ENCODE measurements at regions of chr3 and their contacts with region 1.

Region 1: DNA sequence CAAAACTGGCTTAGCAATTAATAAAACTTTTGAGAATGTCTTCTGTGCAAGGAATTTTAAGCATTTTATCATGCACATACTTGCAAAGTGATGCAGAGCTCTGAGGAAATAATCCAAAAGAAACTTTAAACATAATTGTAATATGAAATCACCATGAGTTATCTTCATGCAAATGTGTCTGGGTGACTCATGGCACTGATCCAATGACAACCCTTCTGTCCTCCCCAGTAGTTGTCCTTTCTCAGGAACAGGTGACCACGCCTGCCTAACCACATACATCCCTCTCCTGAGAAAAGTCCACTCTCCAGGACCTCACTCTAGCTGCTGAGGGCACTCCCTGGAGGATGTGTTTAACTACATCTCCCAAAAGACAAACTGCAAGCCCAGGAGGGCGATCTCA is 530.6 kb upstream of the IL12A start:
- DNase-seq: peak; percentile 92 to 96
- H3K4me3 ChIP-seq: no peak overlapping the region
- H3K27ac ChIP-seq: peak overlapping the region; percentile 63
- H3K4me1 ChIP-seq: peaks cover 25% of the 10 kb centered on the region
- H3K27me3 ChIP-seq: no peaks in the 10 kb centered on the region
- CTCF ChIP-seq: no peak

Region 2: GRCh38 chr3:159322322-159322939 is 135.6 kb before region 1 on chr3:
- CTCF ChIA-PET with region 1: no interaction called
- POLR2A ChIA-PET with region 1: no interaction called
- intact Hi-C with region 1: loop called (anchors 1 kb)
- DNase-seq: peak in 1 of 2 experiments; percentile 34
- H3K4me3 ChIP-seq: no peak overlapping the region
- H3K27ac ChIP-seq: no peak overlapping the region
- H3K4me1 ChIP-seq: no peaks in the 10 kb centered on the region; the same call in 1 of the 2 replicates
- H3K27me3 ChIP-seq: no peaks in the 10 kb centered on the region
- CTCF ChIP-seq: peak; percentile 69

Region 3: GRCh38 chr3:159732172-159733111 is 274.4 kb after region 1 on chr3:
- CTCF ChIA-PET with region 1: interaction called, 7 read pairs
- POLR2A ChIA-PET with region 1: no interaction called
- intact Hi-C with region 1: loop called (anchors 1 kb)
- DNase-seq: peak; percentile 69 to 73
- H3K4me3 ChIP-seq: peak overlapping the region; percentile 38; the same call in 1 of the 2 replicates
- H3K27ac ChIP-seq: no peak overlapping the region
- H3K4me1 ChIP-seq: peaks cover 23% of the 10 kb centered on the region
- H3K27me3 ChIP-seq: no peaks in the 10 kb centered on the region
- CTCF ChIP-seq: no peak

Region 4: GRCh38 chr3:159872374-159873109 is 414.5 kb after region 1 on chr3:
- CTCF ChIA-PET with region 1: no interaction called
- POLR2A ChIA-PET with region 1: no interaction called
- intact Hi-C with region 1: loop called (anchors 5 kb)
- DNase-seq: peak; percentile 56 to 96
- H3K4me3 ChIP-seq: no peak overlapping the region
- H3K27ac ChIP-seq: peak overlapping the region; percentile 82
- H3K4me1 ChIP-seq: peaks cover 23% of the 10 kb centered on the region
- H3K27me3 ChIP-seq: no peaks in the 10 kb centered on the region
- CTCF ChIP-seq: peak; percentile 54; the same call in 1 of the 2 replicates

Measured in PC-9 (cell line).